ENCODE measurements at regions of chr11 and their contacts with region 1.

Region 1: DNA sequence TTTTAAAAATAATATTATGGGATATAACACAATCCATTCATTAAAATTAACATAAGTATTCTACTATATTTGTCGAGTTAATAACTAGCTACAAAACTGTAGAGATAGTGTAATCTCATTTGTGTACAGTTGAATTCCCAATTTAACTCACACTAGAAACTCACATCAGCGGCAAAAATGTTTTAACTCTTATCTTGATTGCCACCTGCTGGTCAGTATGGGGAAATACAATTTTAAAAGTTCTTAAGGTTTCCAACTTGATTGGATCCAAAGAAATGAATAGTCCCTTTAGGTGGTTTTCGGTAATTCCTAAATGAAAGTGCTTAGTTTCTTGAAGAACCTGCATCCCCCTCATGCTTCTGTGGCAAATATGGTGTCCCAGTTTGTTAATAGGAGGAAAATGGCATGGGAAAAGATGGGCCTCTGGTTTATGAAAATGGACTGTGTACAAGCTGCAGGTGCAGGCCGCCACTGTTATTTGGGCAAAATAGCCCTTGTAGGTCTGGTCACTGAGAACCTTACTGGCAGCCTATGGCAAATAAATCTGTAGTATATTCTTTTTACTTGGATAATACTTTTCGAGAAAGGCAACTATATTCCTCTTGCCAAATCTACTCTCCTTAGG is 33.7 kb upstream of the SLC17A6 start:
- DNase-seq: peak; percentile 36
- H3K4me3 Mint-ChIP-seq: no peak overlapping the region
- H3K27ac Mint-ChIP-seq: no peak overlapping the region
- H3K4me1 Mint-ChIP-seq: no peaks in the 10 kb centered on the region
- H3K27me3 Mint-ChIP-seq: peaks cover 49% of the 10 kb centered on the region
- CTCF ChIP-seq: peak; percentile 44

Region 2: GRCh38 chr11:22169833-22170232 is 134.6 kb before region 1 on chr11:
- CTCF ChIA-PET with region 1: interaction called, 17 read pairs
- POLR2A ChIA-PET with region 1: no interaction called
- intact Hi-C with region 1: loop called (anchors 1 kb)
- DNase-seq: peak; percentile 1
- H3K4me3 Mint-ChIP-seq: no peak overlapping the region
- H3K27ac Mint-ChIP-seq: no peak overlapping the region
- H3K4me1 Mint-ChIP-seq: no peaks in the 10 kb centered on the region
- H3K27me3 Mint-ChIP-seq: no peaks in the 10 kb centered on the region
- CTCF ChIP-seq: peak; percentile 18

Region 3: DNA sequence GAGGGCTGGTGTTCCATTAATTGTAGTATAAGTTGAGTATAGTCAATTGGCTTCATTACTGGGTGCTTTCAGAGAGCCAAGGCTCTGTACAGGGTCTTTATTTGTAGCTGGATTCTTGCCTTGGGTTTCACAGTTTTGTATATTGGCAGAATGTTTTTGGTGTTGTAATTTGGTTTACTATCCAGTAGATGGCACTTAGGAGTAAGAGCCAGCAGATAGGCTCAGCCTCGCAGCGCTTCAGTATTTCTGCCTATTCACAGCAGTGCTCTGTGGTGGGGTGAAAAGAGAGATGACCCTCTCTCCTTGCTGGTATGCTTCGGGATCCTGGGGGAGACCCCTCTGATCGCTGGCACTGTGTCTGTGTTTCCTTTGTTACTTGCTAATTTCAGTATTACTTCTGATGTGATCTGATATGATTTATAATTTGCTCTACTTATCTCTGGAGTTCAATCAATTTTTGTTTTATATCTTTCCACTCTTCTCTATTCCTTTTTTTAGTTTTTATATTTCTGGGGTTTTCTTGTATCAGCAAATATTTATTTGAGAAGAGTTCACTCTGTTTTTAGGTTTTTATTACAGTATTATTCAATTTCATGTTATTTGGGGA is 59.4 kb before region 1 on chr11:
- CTCF ChIA-PET with region 1: interaction called, 35 read pairs
- POLR2A ChIA-PET with region 1: no interaction called
- intact Hi-C with region 1: loop called (anchors 1 kb)
- DNase-seq: peak; percentile 43
- H3K4me3 Mint-ChIP-seq: no peak overlapping the region
- H3K27ac Mint-ChIP-seq: no peak overlapping the region
- H3K4me1 Mint-ChIP-seq: no peaks in the 10 kb centered on the region
- H3K27me3 Mint-ChIP-seq: peaks cover 61% of the 10 kb centered on the region
- CTCF ChIP-seq: peak; percentile 53

Region 4: DNA sequence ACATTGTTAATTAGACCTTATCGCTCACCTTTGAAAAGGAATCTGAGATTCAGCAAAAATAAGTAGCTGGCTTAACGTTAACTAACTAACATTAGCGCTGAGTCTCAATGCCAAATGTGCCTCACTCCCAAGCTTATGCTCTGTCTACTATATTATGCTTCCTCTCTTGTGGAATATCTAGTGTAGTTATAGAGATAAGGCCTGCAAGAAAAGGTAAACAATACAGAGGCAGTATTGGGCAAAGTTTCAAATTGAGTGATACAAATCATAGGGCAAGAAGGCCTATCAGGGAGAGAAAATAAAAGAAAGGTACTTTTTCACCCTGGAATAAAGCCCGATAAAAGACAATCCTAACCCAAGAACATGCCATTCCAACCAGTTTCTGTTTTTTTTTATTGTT is 27.9 kb before region 1 on chr11:
- CTCF ChIA-PET with region 1: no interaction called
- POLR2A ChIA-PET with region 1: no interaction called
- intact Hi-C with region 1: no loop called
- DNase-seq: no peak
- H3K4me3 Mint-ChIP-seq: no peak overlapping the region
- H3K27ac Mint-ChIP-seq: no peak overlapping the region
- H3K4me1 Mint-ChIP-seq: no peaks in the 10 kb centered on the region
- H3K27me3 Mint-ChIP-seq: peaks cover 37% of the 10 kb centered on the region
- CTCF ChIP-seq: no peak

Region 5: GRCh38 chr11:22317656-22318055 is 13.2 kb after region 1 on chr11:
- CTCF ChIA-PET with region 1: interaction called, 13 read pairs
- POLR2A ChIA-PET with region 1: no interaction called
- intact Hi-C with region 1: no loop called
- DNase-seq: no peak
- H3K4me3 Mint-ChIP-seq: no peak overlapping the region
- H3K27ac Mint-ChIP-seq: no peak overlapping the region
- H3K4me1 Mint-ChIP-seq: no peaks in the 10 kb centered on the region
- H3K27me3 Mint-ChIP-seq: peaks cover 20% of the 10 kb centered on the region
- CTCF ChIP-seq: no peak